AG04449 (cell line): ENCODE measurements at regions of chr2 and their contacts with region 1.

Region 1: DNA sequence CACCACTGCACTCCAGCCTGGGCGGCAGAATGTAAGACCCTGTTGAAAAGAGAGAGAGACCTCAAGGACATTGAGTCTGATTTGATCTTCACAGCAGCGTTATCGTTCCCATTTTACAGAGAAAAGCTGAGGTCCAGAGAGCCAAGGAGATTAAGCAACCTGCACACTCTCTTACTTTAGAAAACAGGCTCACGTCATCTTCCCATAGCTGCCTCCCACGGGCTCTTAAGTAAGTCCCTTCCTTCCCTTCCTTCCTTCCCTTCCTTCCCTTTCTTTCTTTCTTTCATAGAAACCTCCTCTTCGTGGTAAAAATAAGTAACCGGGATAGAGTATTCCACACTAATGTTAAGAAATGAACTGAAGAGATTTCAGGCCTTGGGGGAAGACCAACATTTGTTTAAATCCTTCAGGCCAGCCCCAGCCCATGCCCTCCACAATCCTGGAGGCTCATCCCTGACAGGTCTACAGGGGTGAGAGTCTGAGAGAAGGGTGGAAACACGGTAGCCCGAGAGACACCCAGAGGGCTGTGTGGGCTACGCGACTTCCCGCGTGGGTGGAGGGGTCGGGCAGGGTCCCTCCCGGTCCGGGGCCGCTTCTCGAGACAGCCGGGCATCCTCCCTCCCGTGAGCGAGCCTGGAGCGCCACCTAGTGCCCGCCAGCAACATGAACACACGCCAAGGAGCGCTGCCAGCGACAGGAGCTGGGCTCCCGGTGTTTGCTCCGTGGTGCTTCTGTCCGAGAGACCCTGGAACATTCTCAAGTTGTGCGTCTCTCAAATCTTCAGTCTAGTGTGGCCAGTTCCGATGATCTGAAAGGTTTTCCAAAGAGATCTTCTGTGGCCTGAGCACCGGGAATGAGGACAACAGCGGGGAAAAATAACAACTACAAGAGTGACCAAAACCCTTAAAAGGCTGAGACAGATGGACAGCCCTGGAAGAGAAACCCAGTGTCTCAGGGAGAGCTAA is 160.3 kb downstream of the INO80D start:
- DNase-seq: no peak
- H3K4me3 ChIP-seq: peak overlapping the region; percentile 45
- CTCF ChIP-seq: peak; percentile 98

Region 2: GRCh38 chr2:204260162-204260877 is 1665.3 kb before region 1 on chr2:
- CTCF ChIA-PET with region 1: interaction called, 38 read pairs
- POLR2A ChIA-PET with region 1: no interaction called
- DNase-seq: peak; percentile 21
- H3K4me3 ChIP-seq: no peak overlapping the region
- CTCF ChIP-seq: peak; percentile 59

Region 3: GRCh38 chr2:205734436-205735037 is 191.1 kb before region 1 on chr2:
- CTCF ChIA-PET with region 1: interaction called, 10 read pairs
- POLR2A ChIA-PET with region 1: no interaction called
- DNase-seq: peak; percentile 60
- H3K4me3 ChIP-seq: no peak overlapping the region
- CTCF ChIP-seq: no peak

Region 4: GRCh38 chr2:205776139-205776538 is 149.5 kb before region 1 on chr2:
- CTCF ChIA-PET with region 1: interaction called, 49 read pairs
- POLR2A ChIA-PET with region 1: no interaction called
- DNase-seq: no peak
- H3K4me3 ChIP-seq: no peak overlapping the region
- CTCF ChIP-seq: peak; percentile 56

Region 5: DNA sequence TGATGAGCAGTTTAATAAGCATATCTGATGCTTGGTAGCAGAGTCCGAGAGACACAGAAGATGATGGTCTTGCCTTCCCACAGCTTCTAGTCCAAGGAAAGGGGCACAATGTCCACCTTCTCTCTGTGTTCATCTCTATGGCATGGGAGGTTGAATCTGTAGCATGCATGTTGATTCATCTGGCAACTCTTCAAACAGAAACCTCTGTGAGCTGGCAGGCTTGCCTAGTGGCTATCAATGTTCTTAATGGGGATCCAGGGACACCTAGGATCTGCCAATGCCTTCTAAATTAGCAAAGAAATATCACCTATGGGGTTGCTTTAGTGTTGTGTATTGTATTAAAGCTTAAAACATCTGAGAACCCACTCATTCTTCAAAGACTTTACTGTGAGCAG is 10.5 kb before region 1 on chr2:
- CTCF ChIA-PET with region 1: interaction called, 52 read pairs
- POLR2A ChIA-PET with region 1: interaction called, 3 read pairs
- DNase-seq: no peak
- H3K4me3 ChIP-seq: no peak overlapping the region
- CTCF ChIP-seq: no peak

Region 6: DNA sequence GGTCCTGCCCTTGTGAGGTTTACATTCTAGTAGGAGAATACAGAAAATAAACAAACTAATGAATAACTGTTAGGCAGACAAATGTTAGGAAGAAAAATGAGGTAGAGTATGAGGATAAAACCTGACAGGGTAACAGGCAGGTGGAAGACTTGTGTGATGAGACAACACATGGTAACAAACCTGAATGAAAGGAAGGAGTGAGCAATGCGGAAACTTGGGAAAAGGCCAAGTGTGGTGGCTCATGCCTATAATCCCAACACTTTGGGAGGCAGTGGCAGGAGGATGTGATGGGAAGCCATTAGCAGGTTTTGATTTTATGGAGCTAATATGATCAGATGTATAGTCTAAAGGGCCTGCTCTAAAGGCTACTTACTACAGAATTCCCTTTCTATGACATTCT is 86.1 kb after region 1 on chr2:
- CTCF ChIA-PET with region 1: no interaction called
- POLR2A ChIA-PET with region 1: no interaction called
- DNase-seq: no peak
- H3K4me3 ChIP-seq: no peak overlapping the region
- CTCF ChIP-seq: no peak